SK-N-SH (cell line): ENCODE measurements at regions of chr6 and their contacts with region 1.

Region 1: DNA sequence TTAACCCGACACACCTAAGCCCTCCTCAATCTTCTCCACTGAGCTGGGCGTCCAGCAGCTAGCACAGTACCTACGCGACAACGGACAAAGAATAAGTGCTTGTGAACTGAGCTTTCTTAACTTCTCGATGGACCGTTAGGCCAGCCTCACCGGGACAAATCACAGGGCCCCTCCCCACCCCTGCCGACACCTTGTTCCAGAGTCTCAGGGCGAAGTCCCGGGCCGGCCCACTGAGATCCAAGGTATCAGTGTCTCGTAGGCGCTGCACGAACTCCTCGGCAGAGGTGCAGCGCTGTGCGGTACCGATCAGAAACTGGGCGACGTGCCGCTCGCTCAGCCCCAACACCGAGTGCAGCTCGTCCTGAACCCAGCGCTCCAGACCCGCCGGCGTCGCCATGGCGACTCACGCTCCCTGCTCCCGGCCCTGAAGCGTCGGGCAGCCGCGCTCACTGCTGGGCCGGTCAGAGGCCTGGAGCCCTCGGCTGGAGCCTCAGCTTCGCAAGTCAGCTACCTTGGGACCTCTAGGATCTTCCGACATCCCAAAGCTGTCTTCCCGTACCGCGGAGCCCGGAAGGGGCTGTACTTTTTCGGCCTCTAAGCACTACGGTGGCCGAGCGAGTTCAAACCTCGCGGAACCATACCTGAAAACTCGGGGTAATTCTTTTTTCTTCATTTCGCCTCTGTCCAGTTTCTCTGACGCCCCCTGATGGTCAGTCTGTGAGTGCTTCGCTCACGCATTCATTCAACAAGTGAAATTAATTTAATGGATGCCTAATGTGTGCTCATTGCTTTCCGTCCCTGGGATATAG is at the start of gene DHX16:
- DNase-seq: peak; percentile 92
- H3K4me3 ChIP-seq: peak within 1 kb of the TSS; percentile 87 to 99
- H3K27ac ChIP-seq: peak within 1 kb of the TSS; percentile 60 to 66
- H3K4me1 ChIP-seq: peaks cover 0 to 5% of the 10 kb centered on the region in 2 experiments; a peak in 3 of 4 replicates
- H3K27me3 ChIP-seq: no peaks in the 10 kb centered on the region
- CTCF ChIP-seq: peak; percentile 96
- EP300 ChIP-seq: peak; percentile 31 to 34; a peak in 2 of 4 replicates
- RAD21 ChIP-seq: peak; percentile 66
- polyA plus RNA-seq, gene DHX16: 59.8 and 63.3 TPM in 2 replicates

Region 2: DNA sequence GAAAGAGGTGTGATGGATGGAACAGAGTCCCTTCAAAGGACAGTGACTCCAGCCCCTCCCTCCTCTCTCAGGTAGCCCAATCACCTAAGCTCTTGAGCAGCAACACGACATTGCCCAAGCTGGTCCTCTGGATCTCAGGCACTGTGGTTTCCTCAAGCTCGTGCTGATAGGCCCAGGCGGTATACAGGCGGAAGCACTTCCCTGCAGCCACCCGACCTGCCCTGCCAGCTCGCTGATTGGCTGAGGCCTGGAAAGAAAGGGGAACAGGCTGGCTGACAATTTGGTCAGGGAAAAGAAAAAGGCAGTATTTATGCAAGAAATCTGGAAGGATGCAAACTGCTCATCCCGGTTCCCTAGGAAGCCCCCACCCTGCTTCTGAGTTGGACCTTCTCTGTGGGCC is 16.1 kb before region 1 on chr6:
- CTCF ChIA-PET with region 1: interaction called, 12 read pairs
- POLR2A ChIA-PET with region 1: interaction called, 3 read pairs
- DNase-seq: no peak
- H3K4me3 ChIP-seq: no peak overlapping the region
- H3K27ac ChIP-seq: no peak overlapping the region
- H3K4me1 ChIP-seq: no peaks in the 10 kb centered on the region
- H3K27me3 ChIP-seq: no peaks in the 10 kb centered on the region
- CTCF ChIP-seq: no peak
- EP300 ChIP-seq: no peak
- RAD21 ChIP-seq: no peak